A549 (cell line): ENCODE measurements at regions of chr10 and their contacts with region 1.

Region 1: DNA sequence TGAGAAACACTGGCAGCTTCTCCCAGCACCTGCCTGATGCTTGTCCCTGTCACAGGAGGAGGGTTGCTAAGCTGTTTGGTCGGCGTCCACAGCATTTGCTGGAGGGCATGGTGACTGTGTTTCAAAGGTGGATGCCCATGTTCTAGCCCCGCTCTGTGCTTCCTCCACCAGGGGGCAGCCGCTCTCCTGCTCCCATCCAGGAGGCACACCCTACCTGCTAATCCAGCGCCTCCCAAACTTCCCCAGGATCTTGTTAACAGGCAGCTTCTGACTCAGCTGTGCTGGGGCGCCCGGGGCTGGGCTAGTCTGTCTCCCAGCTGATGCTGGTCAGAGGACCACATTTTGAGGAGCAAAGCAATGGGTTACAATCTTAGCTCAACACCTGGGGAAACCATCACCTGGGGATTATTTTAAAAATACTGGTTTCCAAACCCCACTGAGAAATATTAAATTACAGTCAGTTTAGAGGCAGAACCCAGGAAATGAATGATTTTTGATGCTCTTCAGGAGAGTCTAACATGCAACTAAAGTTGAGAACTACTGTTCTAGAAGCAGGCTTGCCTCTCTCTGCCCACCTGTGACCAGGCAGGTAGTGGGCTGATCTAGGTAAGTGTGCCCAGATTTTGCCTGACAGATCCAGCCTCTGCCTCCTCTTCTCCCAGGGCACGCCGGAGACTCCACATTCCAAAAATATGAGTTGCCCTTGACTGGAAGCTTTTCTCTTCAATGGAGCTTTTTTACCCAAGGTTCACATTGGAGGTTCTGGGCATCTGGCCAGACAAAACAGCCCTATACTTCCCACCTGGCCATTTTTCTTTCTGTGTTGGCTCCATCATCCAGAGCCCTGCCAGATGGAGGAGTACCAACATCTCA is 92.7 kb upstream of the GPR26 start:
- DNase-seq: peak; percentile 70 to 77
- ATAC-seq: peak; percentile 87 to 97
- H3K4me3 ChIP-seq: no peak overlapping the region
- H3K27ac ChIP-seq: no peak overlapping the region
- H3K4me1 ChIP-seq: no peaks in the 10 kb centered on the region
- CTCF ChIP-seq: peak; percentile 59
- EP300 ChIP-seq: no peak
- POLR2A ChIP-seq: no peak
- RAD21 ChIP-seq: peak; percentile 22 to 55; a peak in 4 of 5 replicates

Region 2: DNA sequence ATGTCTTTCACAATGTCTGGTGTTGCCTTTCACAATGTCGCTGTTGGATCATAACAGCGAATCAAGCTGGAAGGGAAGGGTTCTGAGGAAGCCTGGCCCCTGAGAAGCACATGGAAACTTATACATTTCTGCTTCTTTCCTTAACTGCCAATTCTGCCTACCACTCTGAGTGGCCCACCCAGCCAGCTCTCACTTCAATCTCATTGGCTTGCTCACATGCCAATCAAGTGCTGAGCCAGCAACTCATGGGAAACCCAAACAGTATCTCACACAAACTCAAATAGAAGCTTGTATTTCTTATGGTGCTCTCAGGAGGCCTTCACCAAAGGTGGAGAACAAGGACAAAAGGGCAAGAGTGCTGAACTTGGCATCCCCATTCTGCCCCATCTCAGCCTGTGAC is 24.7 kb before region 1 on chr10:
- CTCF ChIA-PET with region 1: no interaction called
- POLR2A ChIA-PET with region 1: no interaction called
- DNase-seq: no peak
- ATAC-seq: no peak
- H3K4me3 ChIP-seq: no peak overlapping the region
- H3K27ac ChIP-seq: no peak overlapping the region
- H3K4me1 ChIP-seq: no peaks in the 10 kb centered on the region
- CTCF ChIP-seq: no peak
- EP300 ChIP-seq: no peak
- POLR2A ChIP-seq: no peak
- RAD21 ChIP-seq: no peak

Region 3: GRCh38 chr10:123559066-123559822 is 14.2 kb before region 1 on chr10:
- CTCF ChIA-PET with region 1: interaction called, 17 read pairs
- POLR2A ChIA-PET with region 1: no interaction called
- DNase-seq: peak; percentile 60 to 88
- ATAC-seq: peak; percentile 87 to 96
- H3K4me3 ChIP-seq: no peak overlapping the region
- H3K27ac ChIP-seq: no peak overlapping the region
- H3K4me1 ChIP-seq: no peaks in the 10 kb centered on the region
- CTCF ChIP-seq: peak; percentile 86
- EP300 ChIP-seq: no peak
- POLR2A ChIP-seq: no peak
- RAD21 ChIP-seq: peak; percentile 95 to 96

Region 4: DNA sequence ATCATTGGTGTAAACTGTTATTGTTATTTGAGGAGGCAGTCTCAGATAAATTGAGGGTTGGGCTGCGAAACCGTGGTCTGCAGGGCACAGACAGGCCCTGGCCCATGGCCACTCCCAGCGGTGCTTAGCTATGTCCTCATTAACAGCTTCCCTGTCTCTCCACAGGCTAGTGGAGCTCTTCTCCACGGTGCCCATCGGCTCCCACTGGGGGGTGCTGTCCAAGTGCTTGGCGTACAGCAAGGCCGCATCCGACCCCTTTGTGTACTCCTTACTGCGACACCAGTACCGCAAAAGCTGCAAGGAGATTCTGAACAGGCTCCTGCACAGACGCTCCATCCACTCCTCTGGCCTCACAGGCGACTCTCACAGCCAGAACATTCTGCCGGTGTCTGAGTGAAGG is 114.3 kb after region 1 on chr10:
- CTCF ChIA-PET with region 1: no interaction called
- POLR2A ChIA-PET with region 1: no interaction called
- DNase-seq: no peak
- ATAC-seq: peak; percentile 32 to 64; a peak in 3 of 6 replicates
- H3K4me3 ChIP-seq: no peak overlapping the region
- H3K27ac ChIP-seq: no peak overlapping the region
- H3K4me1 ChIP-seq: no peaks in the 10 kb centered on the region
- CTCF ChIP-seq: no peak
- EP300 ChIP-seq: no peak
- POLR2A ChIP-seq: no peak
- RAD21 ChIP-seq: no peak

Region 5: DNA sequence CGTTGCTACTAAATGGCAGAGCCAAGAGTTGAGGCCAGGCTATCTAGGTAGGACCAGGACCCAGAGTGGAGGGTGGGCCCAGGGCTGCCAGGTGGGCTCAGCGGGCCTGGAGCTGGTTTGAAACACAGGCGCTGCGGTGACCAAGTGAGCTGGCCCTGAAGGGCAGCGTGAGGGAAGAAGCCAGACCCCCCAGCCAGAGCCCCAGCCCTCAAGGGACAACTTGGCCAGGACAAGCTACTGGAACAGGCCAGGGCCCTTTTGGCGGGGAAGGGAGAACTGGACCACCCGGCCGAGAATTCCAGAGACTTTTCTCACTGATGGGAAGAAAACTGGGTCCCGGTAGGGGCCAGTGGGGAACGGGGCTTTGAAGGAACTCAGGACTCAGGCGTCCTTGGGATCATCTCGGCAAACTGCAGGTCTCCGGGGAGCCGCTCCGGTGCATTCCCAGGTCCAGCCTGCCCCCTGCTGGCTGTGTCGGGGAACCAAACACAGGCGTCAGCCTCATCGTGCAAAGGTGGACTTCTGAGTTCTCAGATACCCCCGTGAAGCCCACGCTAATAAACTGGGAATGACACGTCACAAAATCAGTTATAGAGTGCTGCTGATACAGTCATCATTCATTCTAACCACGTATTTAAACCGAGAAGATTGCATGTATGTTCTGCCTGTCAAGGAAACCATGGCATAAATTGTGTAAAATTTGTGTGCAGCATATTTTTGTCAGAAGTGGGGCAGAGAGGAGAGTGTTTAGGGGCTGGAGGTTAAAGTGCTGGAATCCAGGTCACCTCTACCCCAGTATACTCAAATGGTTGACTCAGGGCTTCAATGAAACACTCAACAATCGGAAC is 394.1 kb after region 1 on chr10:
- CTCF ChIA-PET with region 1: interaction called, 305 read pairs
- POLR2A ChIA-PET with region 1: no interaction called
- DNase-seq: peak; percentile 58 to 84
- ATAC-seq: peak; percentile 76 to 93; a peak in 4 of 6 replicates
- H3K4me3 ChIP-seq: no peak overlapping the region
- H3K27ac ChIP-seq: no peak overlapping the region
- H3K4me1 ChIP-seq: no peaks in the 10 kb centered on the region
- CTCF ChIP-seq: peak; percentile 90
- EP300 ChIP-seq: no peak
- POLR2A ChIP-seq: no peak
- RAD21 ChIP-seq: peak; percentile 97